WTC11 (cell line): ENCODE measurements at regions of chr11 and their contacts with region 1.

Region 1: GRCh38 chr11:95150946-95151684 is 61.5 kb downstream of the ENDOD1 start:
- DNase-seq: peak; percentile 96
- ATAC-seq: peak; percentile 93
- H3K4me3 Mint-ChIP-seq: peak overlapping the region; percentile 81
- H3K27ac Mint-ChIP-seq: peak overlapping the region; percentile 94
- H3K4me1 Mint-ChIP-seq: peaks cover 14% of the 10 kb centered on the region
- H3K27me3 Mint-ChIP-seq: peaks cover 51% of the 10 kb centered on the region
- CTCF ChIP-seq: no peak

Region 2: DNA sequence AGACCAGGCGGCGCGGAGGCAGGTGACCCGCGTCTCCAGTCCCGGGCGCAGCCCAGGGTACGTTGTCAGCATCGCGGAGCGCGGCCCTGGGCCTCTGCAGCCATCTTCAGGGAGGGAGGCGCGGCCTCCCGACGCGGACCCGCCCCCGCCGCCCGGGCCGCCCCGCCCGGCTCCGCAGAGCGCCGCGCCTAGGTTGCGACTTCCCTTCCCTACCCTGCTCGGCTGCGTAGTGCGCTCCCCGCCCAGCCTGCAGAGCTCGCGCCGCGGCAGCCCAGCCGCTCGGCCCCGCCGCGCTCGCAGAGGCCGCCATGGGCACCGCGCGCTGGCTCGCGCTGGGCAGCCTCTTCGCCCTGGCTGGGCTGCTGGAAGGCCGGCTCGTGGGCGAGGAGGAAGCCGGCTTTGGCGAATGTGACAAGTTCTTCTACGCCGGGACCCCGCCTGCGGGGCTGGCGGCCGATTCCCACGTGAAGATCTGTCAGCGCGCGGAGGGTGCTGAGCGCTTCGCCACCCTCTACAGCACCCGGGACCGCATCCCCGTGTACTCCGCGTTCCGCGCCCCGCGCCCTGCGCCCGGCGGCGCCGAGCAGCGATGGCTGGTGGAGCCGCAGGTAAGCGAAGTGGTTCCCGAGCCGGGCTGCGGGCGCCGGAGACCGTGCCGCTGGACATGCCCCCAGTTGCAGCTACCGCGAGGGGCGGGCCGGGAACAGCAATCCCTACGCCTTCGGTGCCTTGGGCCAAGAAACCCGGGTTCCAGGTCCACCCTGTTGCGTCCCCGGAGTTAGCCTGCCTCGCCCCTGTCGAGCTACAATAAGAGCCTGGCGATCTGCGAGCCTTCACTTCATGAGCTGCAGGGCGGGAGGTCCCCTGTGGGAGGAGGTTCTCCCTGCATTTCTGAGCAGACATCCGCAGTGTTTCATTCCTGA is 61.2 kb before region 1 on chr11 and contains the start of gene ENDOD1:
- CTCF ChIA-PET with region 1: interaction called, 12 read pairs
- POLR2A ChIA-PET with region 1: no interaction called
- DNase-seq: peak; percentile 82
- ATAC-seq: peak; percentile 93
- H3K4me3 Mint-ChIP-seq: peak within 1 kb of the TSS; percentile 81
- H3K27ac Mint-ChIP-seq: no peak within 1 kb of the TSS
- H3K4me1 Mint-ChIP-seq: peaks cover 37% of the 10 kb centered on the region
- H3K27me3 Mint-ChIP-seq: peaks cover 67% of the 10 kb centered on the region
- CTCF ChIP-seq: no peak
- total RNA-seq, gene ENDOD1: 2.6 to 3.3 TPM (median 3.2 TPM) in 3 replicates

Region 3: GRCh38 chr11:95337175-95337957 is 186.3 kb after region 1 on chr11:
- CTCF ChIA-PET with region 1: interaction called, 11 read pairs
- POLR2A ChIA-PET with region 1: no interaction called
- DNase-seq: peak; percentile 51
- ATAC-seq: peak; percentile 59
- H3K4me3 Mint-ChIP-seq: no peak overlapping the region
- H3K27ac Mint-ChIP-seq: no peak overlapping the region
- H3K4me1 Mint-ChIP-seq: peaks cover 18% of the 10 kb centered on the region
- H3K27me3 Mint-ChIP-seq: no peaks in the 10 kb centered on the region
- CTCF ChIP-seq: no peak

Region 4: GRCh38 chr11:95545116-95545875 is 394.2 kb after region 1 on chr11:
- CTCF ChIA-PET with region 1: interaction called, 11 read pairs
- POLR2A ChIA-PET with region 1: no interaction called
- DNase-seq: peak; percentile 14
- ATAC-seq: peak; percentile 59
- H3K4me3 Mint-ChIP-seq: no peak overlapping the region
- H3K27ac Mint-ChIP-seq: no peak overlapping the region
- H3K4me1 Mint-ChIP-seq: no peaks in the 10 kb centered on the region
- H3K27me3 Mint-ChIP-seq: no peaks in the 10 kb centered on the region; the same call in 1 of the 2 replicates
- CTCF ChIP-seq: no peak

Region 5: DNA sequence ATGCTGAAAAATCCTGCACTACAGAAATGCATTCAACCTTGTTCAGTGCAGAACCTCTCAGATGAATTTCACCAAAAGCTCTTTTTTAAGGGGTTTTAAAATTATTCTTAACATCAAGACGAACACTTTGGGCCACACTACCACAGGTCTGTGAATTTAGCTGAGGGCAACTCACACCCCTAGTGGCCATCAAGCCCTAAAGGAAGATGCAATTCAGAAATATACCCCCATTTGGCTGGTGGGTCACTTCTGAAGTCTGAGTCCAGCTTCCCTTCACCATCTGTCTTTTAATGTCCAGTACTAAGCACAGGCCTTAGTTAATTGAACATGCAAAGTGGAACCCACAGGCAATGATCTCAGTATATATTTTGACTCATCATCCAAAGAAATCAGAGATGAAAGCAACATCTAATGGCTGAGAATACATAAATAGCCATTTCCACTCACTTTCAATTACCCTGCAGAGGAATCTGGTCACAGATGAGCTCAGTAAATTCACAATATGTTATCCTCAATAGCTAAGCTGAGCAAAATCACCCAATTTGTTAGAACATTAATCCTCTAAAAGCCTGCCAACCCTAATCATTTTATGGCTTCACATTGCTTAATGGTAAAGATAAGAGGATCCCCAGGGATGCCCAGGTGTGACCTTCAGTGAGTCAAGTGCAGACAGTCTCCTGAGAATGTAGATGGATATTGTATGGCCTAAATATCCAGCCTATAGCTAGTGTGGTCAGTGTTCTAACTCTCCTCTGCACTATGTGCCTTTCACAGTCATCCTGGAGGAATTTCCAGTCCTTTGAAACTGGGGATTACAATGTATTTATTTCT is 588.2 kb after region 1 on chr11:
- CTCF ChIA-PET with region 1: interaction called, 13 read pairs
- POLR2A ChIA-PET with region 1: no interaction called
- DNase-seq: no peak
- ATAC-seq: peak; percentile 65; the same call in 1 of the 2 replicates
- H3K4me3 Mint-ChIP-seq: no peak overlapping the region
- H3K27ac Mint-ChIP-seq: no peak overlapping the region
- H3K4me1 Mint-ChIP-seq: no peaks in the 10 kb centered on the region
- H3K27me3 Mint-ChIP-seq: no peaks in the 10 kb centered on the region
- CTCF ChIP-seq: no peak